ENCODE measurements at regions of chr20 and their contacts with region 1.

Region 1: DNA sequence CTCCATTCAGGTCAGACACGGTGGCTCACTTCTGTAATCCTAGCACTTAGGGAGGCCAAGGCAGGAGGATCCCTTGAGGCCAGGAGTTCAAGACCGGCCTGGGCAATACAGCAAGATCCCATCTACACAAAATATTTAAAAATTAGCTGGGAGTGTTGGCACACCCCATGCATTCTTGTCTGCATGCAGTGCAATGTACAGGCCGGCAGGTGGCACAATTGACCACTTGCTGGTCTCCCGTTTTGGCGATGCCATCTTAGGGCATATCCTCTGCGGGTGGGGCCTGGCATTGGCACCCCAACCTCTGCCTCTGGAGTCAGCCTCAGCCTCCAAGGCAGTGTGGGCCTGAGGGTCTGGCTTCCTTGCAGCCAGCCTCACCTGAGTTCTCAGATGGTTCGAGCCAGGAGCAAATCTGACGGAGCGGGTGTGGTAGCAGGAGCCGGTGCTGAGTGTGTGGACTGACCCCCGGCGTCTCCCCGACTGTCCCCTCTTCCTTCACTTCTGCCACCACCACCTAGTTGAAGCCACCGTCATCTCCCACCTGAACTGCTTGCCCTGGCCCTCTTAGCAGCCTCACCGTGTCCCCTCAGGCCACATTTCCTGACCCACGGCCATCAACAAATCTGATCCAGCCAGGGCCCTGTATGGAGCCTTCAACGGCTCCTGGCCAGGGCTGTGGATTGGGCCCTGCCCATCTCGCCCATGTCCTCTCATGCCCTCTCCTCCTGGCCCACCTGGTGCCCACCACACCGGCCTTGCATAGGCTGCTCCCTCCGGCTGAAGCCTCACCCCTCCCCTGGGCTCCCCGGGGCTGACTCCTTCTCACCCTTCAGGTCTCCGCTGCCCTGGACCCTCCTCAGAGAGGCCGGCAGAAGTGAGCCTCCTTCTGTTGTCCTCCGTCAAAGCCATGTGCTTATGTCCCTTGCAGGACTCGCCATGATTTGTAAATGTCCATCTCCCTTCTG is 44.0 kb downstream of the EFCAB8 start:
- DNase-seq: peak; percentile 60 to 76
- H3K4me3 ChIP-seq: no peak overlapping the region
- H3K27ac ChIP-seq: no peak overlapping the region
- H3K4me1 ChIP-seq: no peaks in the 10 kb centered on the region
- H3K27me3 ChIP-seq: no peaks in the 10 kb centered on the region
- CTCF ChIP-seq: peak in 5 of 7 experiments; percentile 80 to 91 (median 88)
- EP300 ChIP-seq: no peak
- POLR2A ChIP-seq: no peak

Region 2: DNA sequence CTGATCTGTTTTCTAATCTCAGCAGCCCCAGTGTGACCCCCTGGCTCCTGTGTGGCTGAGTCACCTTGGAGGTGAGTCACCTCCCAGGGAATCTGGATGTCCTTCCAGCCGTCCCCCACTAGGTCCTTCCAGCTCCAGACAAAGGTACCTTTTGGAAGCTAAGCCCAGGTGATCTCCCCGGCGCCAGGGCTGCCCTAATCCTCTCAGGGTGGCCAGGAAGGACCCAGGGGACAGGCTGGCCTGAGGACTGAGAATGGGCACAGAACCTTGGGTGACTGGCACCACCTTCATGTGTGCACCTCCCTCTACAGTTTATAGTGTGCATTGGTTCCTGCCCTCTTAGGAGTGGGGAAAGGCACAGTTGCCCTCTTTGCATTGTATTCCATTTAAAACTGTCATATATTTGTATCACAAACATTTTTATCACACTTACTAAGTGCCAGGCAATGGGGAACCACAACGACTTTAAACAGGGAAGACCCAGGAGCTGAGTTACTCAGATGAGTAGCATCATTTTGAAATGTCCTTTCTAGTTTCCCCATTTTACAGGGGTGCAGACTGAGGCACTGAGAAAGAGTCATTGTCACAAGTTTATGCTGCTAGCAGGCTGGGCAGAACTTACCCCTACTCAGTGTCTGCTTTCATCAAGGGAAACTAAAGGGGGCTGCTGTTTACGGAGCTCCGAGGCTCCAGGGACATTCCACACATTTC is 174.1 kb after region 1 on chr20:
- intact Hi-C with region 1: loop called (anchors 5 kb)
- DNase-seq: no peak
- H3K4me3 ChIP-seq: no peak overlapping the region
- H3K27ac ChIP-seq: no peak overlapping the region
- H3K4me1 ChIP-seq: no peaks in the 10 kb centered on the region
- H3K27me3 ChIP-seq: peaks cover 0 to 26% (median 5%) of the 10 kb centered on the region in 3 donors
- CTCF ChIP-seq: no peak
- EP300 ChIP-seq: no peak
- POLR2A ChIP-seq: no peak

Region 3: GRCh38 chr20:33097001-33097400 is 194.3 kb after region 1 on chr20:
- intact Hi-C with region 1: loop called (anchors 5 kb)
- DNase-seq: peak in 1 of 2 donors; percentile 28
- H3K4me3 ChIP-seq: no peak overlapping the region
- H3K27ac ChIP-seq: no peak overlapping the region
- H3K4me1 ChIP-seq: peaks cover 0 to 10% (median 0%) of the 10 kb centered on the region in 4 donors
- H3K27me3 ChIP-seq: no peaks in the 10 kb centered on the region
- CTCF ChIP-seq: no peak
- EP300 ChIP-seq: no peak
- POLR2A ChIP-seq: no peak

Region 4: GRCh38 chr20:33211817-33212424 is 309.2 kb after region 1 on chr20:
- intact Hi-C with region 1: loop called (anchors 10 kb)
- DNase-seq: peak; percentile 82 to 83
- H3K4me3 ChIP-seq: no peak overlapping the region
- H3K27ac ChIP-seq: no peak overlapping the region
- H3K4me1 ChIP-seq: peaks cover 0 to 4% (median 0%) of the 10 kb centered on the region in 4 donors
- H3K27me3 ChIP-seq: peaks cover 0 to 47% (median 0%) of the 10 kb centered on the region in 3 donors
- CTCF ChIP-seq: peak in 4 of 7 experiments; percentile 7 to 74 (median 44)
- EP300 ChIP-seq: no peak
- POLR2A ChIP-seq: no peak

Region 5: DNA sequence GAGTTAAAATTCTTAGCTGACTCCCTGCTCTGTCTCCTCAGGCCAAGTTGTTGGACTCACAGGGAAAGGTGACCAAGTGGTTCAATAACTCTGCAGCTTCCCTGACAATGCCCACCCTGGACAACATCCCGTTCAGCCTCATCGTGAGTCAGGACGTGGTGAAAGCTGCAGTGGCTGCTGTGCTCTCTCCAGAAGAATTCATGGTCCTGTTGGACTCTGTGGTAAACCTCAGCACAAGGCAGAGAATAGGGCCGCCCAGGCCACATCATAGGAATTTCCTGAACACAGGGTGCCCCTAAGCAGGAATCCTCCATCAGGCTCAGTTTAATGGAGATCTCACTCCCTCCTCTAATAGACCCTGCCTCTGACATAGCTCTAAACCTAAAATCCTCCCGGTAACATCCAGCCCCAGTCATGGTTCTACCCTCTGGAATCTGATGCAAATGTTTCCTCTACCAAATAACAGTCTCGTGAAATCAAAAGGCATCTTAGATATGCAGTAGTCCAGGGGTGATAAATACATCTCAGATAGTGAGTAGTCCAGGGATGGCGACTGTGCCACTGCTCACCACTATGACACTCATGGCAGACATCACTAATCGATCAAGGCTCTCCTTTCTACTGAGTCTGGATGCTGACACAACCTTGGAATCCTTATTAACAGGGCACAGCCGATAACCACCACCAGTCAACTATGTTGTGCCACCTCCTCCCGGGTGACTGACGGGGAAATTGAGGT is 398.6 kb after region 1 on chr20:
- intact Hi-C with region 1: loop called (anchors 10 kb)
- DNase-seq: no peak
- H3K4me3 ChIP-seq: no peak overlapping the region
- H3K27ac ChIP-seq: no peak overlapping the region
- H3K4me1 ChIP-seq: peaks cover 0 to 6% (median 5%) of the 10 kb centered on the region in 4 donors
- H3K27me3 ChIP-seq: peaks cover 0 to 24% (median 0%) of the 10 kb centered on the region in 3 donors
- CTCF ChIP-seq: no peak
- EP300 ChIP-seq: no peak
- POLR2A ChIP-seq: no peak

Measured in stomach (tissue), 19 donors.